Naive thymus-derived CD4-positive, alpha-beta T cell (primary cell): ENCODE measurements at regions of chr3 and their contacts with region 1.

Region 1: GRCh38 chr3:107604057-107604822 is 81.5 kb downstream of the BBX start:
- DNase-seq: no peak
- ATAC-seq: no peak
- H3K4me3 ChIP-seq: no peak overlapping the region
- H3K4me3 Mint-ChIP-seq: no peak overlapping the region
- H3K27ac ChIP-seq: no peak overlapping the region
- H3K27ac Mint-ChIP-seq: peak overlapping the region in 3 of 9 donors; percentile 3 to 7 (median 3)
- H3K4me1 ChIP-seq: peaks cover 20 to 21% of the 10 kb centered on the region in 2 donors
- H3K4me1 Mint-ChIP-seq: peaks cover 20 to 70% (median 51%) of the 10 kb centered on the region in 7 donors
- H3K27me3 ChIP-seq: no peaks in the 10 kb centered on the region
- H3K27me3 Mint-ChIP-seq: no peaks in the 10 kb centered on the region

Region 2: GRCh38 chr3:106534206-106534605 is 1070.0 kb before region 1 on chr3:
- CTCF ChIA-PET with region 1: no interaction called
- POLR2A ChIA-PET with region 1: no interaction called
- intact Hi-C with region 1: no loop called
- DNase-seq: peak in 1 of 9 donors; percentile 51
- ATAC-seq: peak; percentile 85
- H3K4me3 ChIP-seq: no peak overlapping the region
- H3K4me3 Mint-ChIP-seq: no peak overlapping the region
- H3K27ac ChIP-seq: no peak overlapping the region
- H3K27ac Mint-ChIP-seq: no peak overlapping the region
- H3K4me1 ChIP-seq: peaks cover 0 to 4% of the 10 kb centered on the region in 2 donors
- H3K4me1 Mint-ChIP-seq: peaks cover 0 to 14% (median 0%) of the 10 kb centered on the region in 7 donors
- H3K27me3 ChIP-seq: no peaks in the 10 kb centered on the region
- H3K27me3 Mint-ChIP-seq: peaks cover 0 to 6% (median 0%) of the 10 kb centered on the region in 5 donors

Region 3: DNA sequence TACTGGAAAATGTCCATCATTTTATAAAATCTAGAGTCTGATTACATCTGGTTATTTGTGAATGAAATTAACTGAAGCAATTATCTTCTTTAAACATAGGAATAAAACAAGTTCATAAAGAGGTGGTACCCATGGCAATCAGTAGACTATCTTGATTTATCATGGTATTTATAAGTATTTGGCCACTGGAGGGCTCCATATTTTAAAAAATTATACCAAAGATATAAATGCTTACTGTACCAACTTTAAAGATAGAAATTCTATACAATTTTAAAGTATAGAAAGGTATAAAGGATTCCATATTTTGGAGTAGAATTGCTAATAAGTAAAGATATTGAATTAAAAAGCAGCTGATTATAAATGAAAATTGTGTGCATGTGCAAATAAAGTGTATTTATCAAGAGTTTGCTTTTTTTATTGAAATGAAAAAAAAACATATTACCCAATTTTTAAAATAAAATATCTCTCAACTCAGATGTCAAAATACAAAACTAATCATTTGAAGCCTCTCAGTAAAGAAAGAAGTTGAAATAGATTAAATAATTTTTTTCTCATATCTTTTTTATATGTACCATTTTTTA is 23.8 kb after region 1 on chr3:
- CTCF ChIA-PET with region 1: no interaction called
- POLR2A ChIA-PET with region 1: no interaction called
- intact Hi-C with region 1: loop called in 1 of 2 experiments (anchors 2 kb)
- DNase-seq: no peak
- ATAC-seq: no peak
- H3K4me3 ChIP-seq: no peak overlapping the region
- H3K4me3 Mint-ChIP-seq: no peak overlapping the region
- H3K27ac ChIP-seq: no peak overlapping the region
- H3K27ac Mint-ChIP-seq: no peak overlapping the region
- H3K4me1 ChIP-seq: peaks cover 0 to 9% of the 10 kb centered on the region in 2 donors
- H3K4me1 Mint-ChIP-seq: peaks cover 21 to 58% (median 42%) of the 10 kb centered on the region in 7 donors
- H3K27me3 ChIP-seq: no peaks in the 10 kb centered on the region
- H3K27me3 Mint-ChIP-seq: no peaks in the 10 kb centered on the region